ENCODE measurements at regions of chr5 and their contacts with region 1.

Region 1: DNA sequence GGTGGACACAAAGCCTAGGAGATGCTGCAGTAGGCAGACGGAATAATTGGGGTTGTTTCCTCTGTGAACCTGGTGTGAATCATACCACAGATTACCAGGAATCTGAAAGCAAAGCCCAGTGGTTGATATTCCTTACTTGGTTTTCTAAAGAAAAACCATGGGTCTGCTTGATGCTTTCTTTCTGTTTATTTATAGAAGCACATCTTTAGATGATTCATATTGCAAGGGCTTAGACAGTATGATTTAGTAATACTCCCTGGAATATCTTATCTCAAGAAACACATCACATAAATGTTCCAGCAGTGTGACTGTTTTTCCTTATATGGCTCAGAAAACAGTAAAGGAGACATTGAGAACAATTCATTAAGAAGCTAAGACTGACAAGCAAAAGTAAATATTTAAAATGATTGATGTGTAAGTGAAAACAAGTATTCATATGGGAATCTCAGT is 623.3 kb downstream of the RAB3C start:
- DNase-seq: no peak
- H3K4me3 ChIP-seq: no peak overlapping the region
- H3K27ac ChIP-seq: no peak overlapping the region
- H3K4me1 ChIP-seq: no peaks in the 10 kb centered on the region
- H3K27me3 ChIP-seq: no peaks in the 10 kb centered on the region
- CTCF ChIP-seq: no peak
- EP300 ChIP-seq: no peak
- POLR2A ChIP-seq: no peak

Region 2: DNA sequence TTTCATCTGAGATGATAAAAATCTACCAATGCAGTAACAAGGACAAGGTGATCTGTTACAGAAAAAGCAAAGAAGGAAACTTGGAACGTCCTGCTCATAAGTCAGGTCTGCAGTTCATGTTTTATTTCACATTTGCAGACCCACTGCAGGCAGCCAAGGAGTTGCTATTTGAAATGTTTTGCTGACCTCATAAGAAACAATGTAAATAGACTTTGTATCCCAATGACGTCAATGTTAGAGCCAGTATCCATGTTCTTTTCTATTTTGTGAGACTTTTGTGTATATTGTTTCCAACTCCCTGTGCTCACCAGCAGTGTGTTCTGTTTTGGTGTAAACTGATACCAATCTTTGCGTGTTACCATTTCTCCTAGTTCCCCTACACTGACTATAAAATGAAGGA is 1181.0 kb after region 1 on chr5:
- intact Hi-C with region 1: loop called in 1 of 4 experiments (anchors 5 kb)
- DNase-seq: no peak
- H3K4me3 ChIP-seq: no peak overlapping the region
- H3K27ac ChIP-seq: no peak overlapping the region
- H3K4me1 ChIP-seq: no peaks in the 10 kb centered on the region
- H3K27me3 ChIP-seq: no peaks in the 10 kb centered on the region
- CTCF ChIP-seq: no peak
- EP300 ChIP-seq: no peak
- POLR2A ChIP-seq: no peak

Measured in ovary (tissue), 10 donors.